ENCODE measurements at regions of chr16 and their contacts with region 1.

Region 1: GRCh38 chr16:84484579-84485254 is 19.7 kb downstream of the MEAK7 start:
- DNase-seq: peak in 1 of 2 experiments; percentile 31
- H3K4me3 ChIP-seq: no peak overlapping the region
- H3K27ac ChIP-seq: no peak overlapping the region
- H3K4me1 ChIP-seq: no peaks in the 10 kb centered on the region
- H3K27me3 ChIP-seq: no peaks in the 10 kb centered on the region
- CTCF ChIP-seq: peak; percentile 81

Region 2: GRCh38 chr16:84084570-84085270 is 400.0 kb before region 1 on chr16:
- CTCF ChIA-PET with region 1: no interaction called
- POLR2A ChIA-PET with region 1: no interaction called
- intact Hi-C with region 1: loop called (anchors 2 kb)
- DNase-seq: peak; percentile 45 to 68
- H3K4me3 ChIP-seq: no peak overlapping the region
- H3K27ac ChIP-seq: no peak overlapping the region
- H3K4me1 ChIP-seq: no peaks in the 10 kb centered on the region
- H3K27me3 ChIP-seq: no peaks in the 10 kb centered on the region
- CTCF ChIP-seq: peak; percentile 91